ENCODE measurements at regions of chr10 and their contacts with region 1.

Region 1: DNA sequence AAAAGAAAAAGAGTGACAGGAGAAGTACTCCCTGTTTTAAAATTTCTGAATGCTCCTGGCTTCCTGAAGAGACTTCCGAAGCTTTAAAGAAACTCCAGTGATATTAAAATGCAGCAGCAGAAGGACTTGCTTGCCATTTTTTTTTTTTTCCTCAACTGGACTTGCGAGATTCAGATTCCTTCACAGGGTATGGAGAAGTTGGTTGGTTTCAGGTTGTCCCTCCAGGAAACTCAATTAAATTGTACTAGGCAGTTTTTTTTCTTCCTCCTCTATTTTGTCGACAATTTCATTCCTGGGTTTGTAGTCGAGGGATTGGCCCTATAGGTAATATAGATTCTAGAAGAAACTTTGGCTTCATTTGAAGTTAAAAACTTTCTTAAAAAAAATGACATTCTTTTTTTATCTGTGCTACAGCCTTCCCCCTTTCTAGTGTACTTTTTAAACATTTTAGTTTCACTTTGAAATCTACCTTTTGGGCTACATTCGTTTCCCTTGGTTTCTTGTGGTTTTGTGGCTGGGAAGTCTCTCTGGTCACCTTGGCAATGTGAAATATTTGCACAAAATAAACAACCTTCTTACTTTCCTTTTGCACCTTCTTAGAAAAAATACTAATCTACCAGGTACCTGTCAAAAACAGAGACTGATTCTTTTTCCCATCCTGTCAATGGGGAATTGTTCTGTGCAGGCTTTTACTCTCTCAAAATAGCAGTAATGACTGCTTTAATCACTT is 350.1 kb downstream of the GATA3 start:
- DNase-seq: peak; percentile 71
- H3K4me3 Mint-ChIP-seq: peak overlapping the region; percentile 57
- H3K27ac Mint-ChIP-seq: peak overlapping the region; percentile 89
- H3K4me1 Mint-ChIP-seq: peaks cover 80% of the 10 kb centered on the region
- H3K27me3 Mint-ChIP-seq: no peaks in the 10 kb centered on the region

Region 2: GRCh38 chr10:8053446-8054290 is 350.9 kb before region 1 on chr10:
- CTCF ChIA-PET with region 1: interaction called, 7 read pairs
- POLR2A ChIA-PET with region 1: interaction called, 58 read pairs
- DNase-seq: peak; percentile 95
- H3K4me3 Mint-ChIP-seq: peak overlapping the region; percentile 98
- H3K27ac Mint-ChIP-seq: peak overlapping the region; percentile 98
- H3K4me1 Mint-ChIP-seq: peaks cover 36% of the 10 kb centered on the region
- H3K27me3 Mint-ChIP-seq: peaks cover 24% of the 10 kb centered on the region

Region 3: DNA sequence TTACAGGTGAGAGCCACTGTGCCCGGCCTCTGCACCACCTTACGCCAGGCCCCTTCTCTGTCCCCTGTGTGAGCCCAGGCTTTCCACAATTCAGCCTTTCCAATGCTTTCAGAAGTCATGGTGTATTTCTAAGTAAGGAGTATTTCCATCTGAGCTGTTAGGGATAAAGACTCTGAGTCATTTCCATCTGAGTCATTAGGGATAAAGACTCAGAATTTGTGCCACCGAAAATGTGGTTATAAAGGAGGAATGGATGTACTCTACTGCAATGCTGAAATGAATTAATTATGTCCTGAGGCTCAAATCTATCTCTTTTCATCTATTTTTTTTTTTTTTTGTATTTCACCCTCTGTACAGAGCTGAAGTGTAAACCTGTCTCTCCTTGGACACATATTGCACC is 266.1 kb before region 1 on chr10:
- CTCF ChIA-PET with region 1: interaction called, 5 read pairs
- POLR2A ChIA-PET with region 1: interaction called, 24 read pairs
- DNase-seq: no peak
- H3K4me3 Mint-ChIP-seq: peak overlapping the region; percentile 82
- H3K27ac Mint-ChIP-seq: peak overlapping the region; percentile 97
- H3K4me1 Mint-ChIP-seq: peaks cover 56% of the 10 kb centered on the region
- H3K27me3 Mint-ChIP-seq: no peaks in the 10 kb centered on the region

Region 4: DNA sequence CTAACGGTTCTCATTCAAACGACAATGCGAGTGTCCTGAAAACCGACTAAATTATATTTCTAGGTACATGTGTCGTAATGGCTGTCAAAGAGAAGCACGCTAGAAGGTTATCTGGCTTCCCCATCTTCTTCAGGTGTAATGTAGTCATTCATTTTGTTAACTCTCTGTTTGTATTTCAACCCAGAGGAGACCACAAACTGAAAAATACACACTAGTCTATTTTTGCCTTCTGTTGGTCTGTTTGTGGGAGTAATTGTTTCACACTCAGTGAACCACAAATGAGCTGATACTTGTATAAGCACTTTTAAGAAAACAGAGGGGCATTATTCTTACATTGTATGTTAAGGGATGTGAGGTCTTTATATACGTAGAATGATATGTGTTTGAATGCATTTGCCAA is 44.2 kb before region 1 on chr10:
- CTCF ChIA-PET with region 1: interaction called, 3 read pairs
- POLR2A ChIA-PET with region 1: interaction called, 29 read pairs
- DNase-seq: no peak
- H3K4me3 Mint-ChIP-seq: peak overlapping the region; percentile 28
- H3K27ac Mint-ChIP-seq: peak overlapping the region; percentile 88
- H3K4me1 Mint-ChIP-seq: peaks cover 72% of the 10 kb centered on the region
- H3K27me3 Mint-ChIP-seq: peaks cover 2% of the 10 kb centered on the region

Region 5: DNA sequence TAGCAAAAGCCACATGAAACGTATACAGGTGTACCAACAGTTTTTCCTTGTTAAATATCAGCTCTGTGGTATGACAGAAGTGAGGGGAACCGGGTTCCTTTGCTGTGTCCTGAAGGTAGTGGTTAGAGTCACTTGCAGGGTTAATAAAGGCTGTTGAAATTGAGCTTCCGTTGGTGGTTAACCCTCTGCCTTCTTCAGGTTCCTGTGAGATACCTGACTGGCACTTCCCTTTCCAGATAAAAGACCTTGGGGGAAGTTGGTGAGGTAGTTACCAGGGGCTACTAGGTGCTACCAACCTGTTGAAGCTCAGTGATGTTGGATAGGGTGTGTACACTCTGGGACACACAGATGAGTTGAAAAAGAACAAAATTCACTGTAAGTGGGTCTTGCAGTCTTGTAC is 34.0 kb after region 1 on chr10:
- CTCF ChIA-PET with region 1: interaction called, 6 read pairs
- POLR2A ChIA-PET with region 1: interaction called, 11 read pairs
- DNase-seq: peak; percentile 42
- H3K4me3 Mint-ChIP-seq: no peak overlapping the region
- H3K27ac Mint-ChIP-seq: peak overlapping the region; percentile 16
- H3K4me1 Mint-ChIP-seq: peaks cover 36% of the 10 kb centered on the region
- H3K27me3 Mint-ChIP-seq: peaks cover 6% of the 10 kb centered on the region

Measured in activated CD4-positive, alpha-beta memory T cell treated with anti-CD3 and anti-CD28 coated beads, Interleukin-2, amount 10 ng/mL, durations not matched to agents 7 days and 5 days (primary cell).